Endothelial cell of umbilical vein (primary cell): ENCODE measurements at regions of chr6 and their contacts with region 1.

Region 1: DNA sequence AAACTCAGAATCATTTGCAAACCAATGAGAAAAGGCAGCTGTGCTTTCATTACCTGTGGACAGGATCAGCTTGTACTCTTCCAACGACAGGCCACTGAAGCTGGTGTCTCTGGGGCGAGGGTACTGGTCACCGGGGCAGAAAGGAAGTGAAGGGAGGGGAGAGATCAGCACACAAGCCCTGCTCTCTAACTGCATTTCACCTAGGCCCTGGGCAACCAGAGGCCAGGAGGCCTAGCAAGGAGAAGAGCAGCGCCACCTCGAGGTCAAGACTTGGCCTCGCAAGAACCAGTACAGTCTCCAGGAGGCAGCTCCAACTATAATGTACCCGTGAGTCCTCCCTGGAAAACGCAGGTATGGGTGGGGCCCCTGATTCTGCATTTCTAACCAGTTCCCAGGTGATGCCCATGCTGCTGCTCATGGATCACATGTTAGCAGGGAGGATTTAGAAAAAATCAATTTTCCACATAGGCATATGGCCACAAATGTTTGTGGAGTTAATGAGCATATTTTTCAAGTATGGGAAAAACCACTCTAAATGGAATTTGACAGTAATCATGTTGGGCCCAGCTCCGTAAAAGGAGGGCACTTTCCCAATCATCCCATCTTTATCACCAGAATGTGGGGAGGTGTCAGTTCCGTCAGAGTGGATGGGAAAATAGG is 11.0 kb downstream of the UQCC2 start:
- DNase-seq: peak; percentile 81
- H3K4me3 ChIP-seq: no peak overlapping the region
- H3K27ac ChIP-seq: peak overlapping the region; percentile 46
- H3K4me1 ChIP-seq: peaks cover 45% of the 10 kb centered on the region
- H3K27me3 ChIP-seq: no peaks in the 10 kb centered on the region
- CTCF ChIP-seq: peak; percentile 79 to 92
- POLR2A ChIP-seq: no peak

Region 2: DNA sequence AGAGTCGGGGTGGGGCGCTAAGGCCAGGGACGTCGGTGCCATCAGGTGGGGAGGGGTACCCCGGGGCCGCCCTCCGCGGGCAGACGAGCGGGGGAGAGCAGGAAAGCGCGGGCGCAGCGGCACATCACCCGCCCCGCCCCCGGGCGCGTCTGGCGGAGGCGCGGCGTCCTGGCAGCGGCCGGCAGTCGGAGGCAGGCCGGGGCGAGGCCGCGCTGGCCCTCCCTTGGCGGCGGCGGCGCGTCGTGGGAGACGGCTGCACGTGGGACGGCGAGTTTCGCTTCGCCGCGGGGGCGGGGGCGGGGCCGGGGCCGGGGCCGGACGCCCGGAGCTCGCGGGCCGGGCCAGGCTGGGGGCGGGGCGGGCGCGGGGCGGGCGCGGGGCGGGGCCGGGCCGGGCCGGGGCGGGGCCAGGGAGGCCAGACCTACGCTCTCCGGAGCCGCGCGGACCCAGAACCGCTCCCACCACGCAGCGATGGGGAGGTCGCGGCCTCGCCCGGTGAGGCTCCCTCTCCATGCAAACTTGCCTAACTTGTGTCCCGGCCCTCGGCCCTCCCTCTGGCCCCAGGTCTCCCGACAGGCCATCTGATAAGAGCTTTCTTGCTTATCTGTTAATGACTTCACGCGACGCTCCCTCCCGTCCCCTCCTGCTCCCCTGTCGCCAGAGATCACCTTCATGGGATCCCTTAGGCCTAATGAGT is 66.9 kb before region 1 on chr6:
- CTCF ChIA-PET with region 1: interaction called, 5 read pairs
- POLR2A ChIA-PET with region 1: no interaction called
- dilution Hi-C with region 1: no loop called
- intact Hi-C with region 1: loop called (anchors 2 kb)
- DNase-seq: peak; percentile 66
- H3K4me3 ChIP-seq: peak overlapping the region; percentile 33 to 68 (median 35)
- H3K27ac ChIP-seq: no peak overlapping the region
- H3K4me1 ChIP-seq: peaks cover 23% of the 10 kb centered on the region
- H3K27me3 ChIP-seq: no peaks in the 10 kb centered on the region
- CTCF ChIP-seq: no peak
- POLR2A ChIP-seq: peak; percentile 39

Region 3: DNA sequence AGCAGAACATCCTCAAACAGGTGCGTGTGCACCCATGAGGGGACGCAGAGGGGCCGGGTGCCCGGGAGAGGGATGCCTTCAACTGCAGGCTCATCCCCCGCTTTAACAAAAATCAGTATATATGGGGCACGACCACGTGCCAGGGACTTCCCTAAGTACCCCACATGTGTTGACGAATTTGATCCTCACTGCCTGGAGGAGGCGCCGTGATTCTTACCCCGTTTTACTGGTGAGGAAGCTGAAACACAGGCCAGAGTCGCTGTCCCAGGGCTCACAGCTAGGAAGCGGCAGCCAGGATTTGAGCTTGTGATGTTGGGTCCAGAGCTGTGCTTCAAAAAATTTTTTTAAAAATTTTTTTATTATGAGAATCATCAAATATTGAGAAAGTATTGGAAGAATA is 34.6 kb before region 1 on chr6:
- CTCF ChIA-PET with region 1: interaction called, 15 read pairs
- POLR2A ChIA-PET with region 1: no interaction called
- dilution Hi-C with region 1: no loop called
- intact Hi-C with region 1: no loop called
- DNase-seq: no peak
- H3K4me3 ChIP-seq: no peak overlapping the region
- H3K27ac ChIP-seq: no peak overlapping the region
- H3K4me1 ChIP-seq: no peaks in the 10 kb centered on the region
- H3K27me3 ChIP-seq: no peaks in the 10 kb centered on the region
- CTCF ChIP-seq: no peak
- POLR2A ChIP-seq: no peak

Region 4: GRCh38 chr6:33672808-33673207 is 27.7 kb before region 1 on chr6:
- CTCF ChIA-PET with region 1: interaction called, 15 read pairs
- POLR2A ChIA-PET with region 1: no interaction called
- dilution Hi-C with region 1: no loop called
- intact Hi-C with region 1: loop called (anchors 1 kb)
- DNase-seq: peak; percentile 92
- H3K4me3 ChIP-seq: no peak overlapping the region
- H3K27ac ChIP-seq: peak overlapping the region; percentile 13
- H3K4me1 ChIP-seq: peaks cover 25% of the 10 kb centered on the region
- H3K27me3 ChIP-seq: no peaks in the 10 kb centered on the region
- CTCF ChIP-seq: peak; percentile 51 to 70
- POLR2A ChIP-seq: no peak

Region 5: DNA sequence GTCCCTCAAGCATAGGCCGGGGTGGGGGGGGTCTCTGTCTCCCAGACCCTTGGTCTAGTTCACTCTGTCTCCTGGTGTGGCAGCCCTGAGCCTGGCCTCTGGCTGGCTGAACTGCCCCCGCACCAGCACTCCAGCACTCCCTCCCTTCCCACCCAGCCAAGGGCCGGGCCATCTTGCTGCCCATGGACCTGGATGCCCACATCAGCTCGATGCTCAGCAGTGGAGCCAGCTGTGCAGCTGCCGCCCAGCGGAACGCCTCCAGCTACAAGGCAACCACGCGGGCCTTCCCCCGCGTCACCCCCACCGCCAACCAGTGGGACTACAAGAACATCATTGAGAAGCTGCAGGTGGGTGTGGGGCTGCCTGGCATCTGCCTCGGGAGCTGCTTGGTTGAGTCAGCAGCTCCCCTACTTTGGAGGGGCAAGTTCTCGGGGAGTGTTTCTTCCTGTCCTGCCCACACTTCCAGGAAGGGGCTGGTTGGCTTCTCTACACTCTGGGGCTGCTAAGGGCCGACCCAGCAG is 17.4 kb before region 1 on chr6:
- CTCF ChIA-PET with region 1: interaction called, 10 read pairs
- POLR2A ChIA-PET with region 1: no interaction called
- dilution Hi-C with region 1: no loop called
- intact Hi-C with region 1: no loop called
- DNase-seq: no peak
- H3K4me3 ChIP-seq: no peak overlapping the region
- H3K27ac ChIP-seq: no peak overlapping the region
- H3K4me1 ChIP-seq: no peaks in the 10 kb centered on the region
- H3K27me3 ChIP-seq: no peaks in the 10 kb centered on the region
- CTCF ChIP-seq: no peak
- POLR2A ChIP-seq: no peak

Region 6: DNA sequence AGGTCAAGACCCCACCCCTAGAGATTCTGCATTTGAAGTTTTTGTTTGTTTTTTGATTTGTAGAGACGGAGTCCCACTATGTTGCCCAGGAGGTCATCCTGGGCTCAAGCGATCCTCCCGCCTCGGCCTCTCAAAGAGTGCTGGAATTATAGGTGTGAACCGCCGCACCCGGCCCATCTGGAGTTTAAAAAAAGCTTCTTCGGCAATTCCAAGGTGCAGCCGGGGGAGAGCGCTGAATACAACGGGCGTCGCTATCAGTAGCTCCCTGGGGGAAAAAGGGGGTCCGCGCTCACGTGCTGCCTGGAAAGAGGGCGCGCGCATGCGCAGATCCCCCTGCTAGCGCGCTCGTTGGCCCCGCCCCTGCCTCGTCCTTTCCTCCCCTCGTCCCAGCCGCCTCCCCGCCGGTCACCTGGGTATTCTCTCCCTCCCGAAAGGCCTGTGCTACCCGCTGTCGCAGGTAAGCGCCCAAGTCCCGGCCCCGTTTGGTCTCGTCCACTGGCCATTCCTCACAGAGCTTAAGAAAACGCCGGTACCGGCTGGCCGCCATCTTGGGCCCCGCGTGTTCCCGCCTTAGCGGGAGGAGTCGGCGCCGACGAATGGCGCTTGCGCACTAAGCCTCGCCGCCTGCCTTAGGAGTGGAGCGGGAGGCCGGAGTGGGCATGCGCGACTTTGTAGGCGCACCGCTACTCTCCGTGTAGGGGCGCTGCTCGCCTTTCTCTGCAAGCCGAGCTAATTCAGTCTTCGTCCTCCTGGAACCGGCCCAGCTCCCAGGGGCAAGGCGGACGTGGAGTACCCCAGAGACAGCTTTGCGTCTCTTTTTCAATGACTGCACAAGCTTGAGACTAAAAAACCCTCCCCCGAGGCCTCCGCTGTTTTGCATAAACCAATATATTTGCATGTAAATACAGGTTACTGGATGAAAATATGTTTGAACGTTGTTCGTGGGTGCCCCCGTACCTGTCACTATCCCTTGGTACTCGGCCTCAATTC is 10.9 kb after region 1 on chr6 and contains the start of gene UQCC2:
- CTCF ChIA-PET with region 1: interaction called, 26 read pairs
- POLR2A ChIA-PET with region 1: interaction called, 4 read pairs
- dilution Hi-C with region 1: no loop called
- intact Hi-C with region 1: no loop called
- DNase-seq: peak; percentile 97
- H3K4me3 ChIP-seq: peak within 1 kb of the TSS; percentile 74 to 92 (median 85)
- H3K27ac ChIP-seq: peak within 1 kb of the TSS; percentile 95
- H3K4me1 ChIP-seq: peaks cover 17% of the 10 kb centered on the region
- H3K27me3 ChIP-seq: no peaks in the 10 kb centered on the region
- CTCF ChIP-seq: peak; percentile 57 to 75
- POLR2A ChIP-seq: peak; percentile 97
- total RNA-seq, gene UQCC2: 91.5 and 95.3 TPM in 2 replicates